Right cardiac atrium (tissue), 5 donors: ENCODE measurements at regions of chr3 and their contacts with region 1.

Region 1: DNA sequence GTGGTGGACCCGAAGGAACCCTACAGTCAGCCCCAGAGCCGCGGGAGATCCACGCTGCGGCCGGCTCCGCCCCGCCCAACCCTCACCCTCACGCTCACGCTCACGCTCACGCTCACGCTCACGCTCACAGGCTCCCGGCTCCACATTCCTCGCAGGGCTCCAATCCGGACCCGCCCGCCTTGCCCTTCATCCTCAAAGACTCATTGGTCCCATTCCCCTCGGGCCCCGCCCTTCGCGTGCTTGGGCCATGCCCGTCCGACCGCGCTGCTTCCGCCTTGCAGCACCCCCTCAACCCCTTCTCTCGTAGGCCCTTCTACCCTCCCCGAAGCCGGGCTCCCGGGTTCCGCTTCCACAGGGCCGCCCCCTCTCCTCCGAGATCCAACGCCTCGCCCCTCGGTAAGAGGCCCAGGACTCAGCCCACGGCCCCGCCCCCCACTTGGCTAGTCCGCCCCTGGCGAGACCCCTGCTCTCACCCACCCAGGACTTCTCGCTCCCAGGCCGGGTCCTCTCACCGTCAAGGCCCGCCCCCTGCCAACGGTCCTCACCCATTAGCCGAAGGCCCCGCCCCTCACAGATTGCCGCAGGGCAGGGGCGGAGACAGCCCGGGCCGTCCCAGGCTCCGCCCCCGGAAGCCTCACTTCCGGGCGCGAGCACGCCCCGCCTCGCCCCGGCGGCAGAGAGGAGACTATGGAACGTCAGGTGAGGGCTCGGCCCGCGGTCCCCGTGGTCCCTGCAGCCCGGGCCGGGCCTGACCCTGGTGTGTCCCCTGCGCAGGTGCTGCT is at the start of gene APEH:
- DNase-seq: peak; percentile 98 to 99 (median 98)
- ATAC-seq: peak; percentile 94 to 95
- H3K4me3 ChIP-seq: peak within 1 kb of the TSS; percentile 67
- H3K27ac ChIP-seq: peak within 1 kb of the TSS; percentile 74
- H3K4me1 ChIP-seq: peaks cover 5% of the 10 kb centered on the region
- H3K27me3 ChIP-seq: no peaks in the 10 kb centered on the region
- total RNA-seq, gene APEH: 75.7 to 110 (median 93.6) TPM

Region 2: GRCh38 chr3:49469936-49470713 is 203.8 kb before region 1 on chr3 and contains the start of gene DAG1:
- intact Hi-C with region 1: loop called in 1 of 4 experiments (anchors 10 kb)
- DNase-seq: peak; percentile 98 to 99 (median 99)
- ATAC-seq: peak; percentile 93
- H3K4me3 ChIP-seq: peak within 1 kb of the TSS; percentile 50
- H3K27ac ChIP-seq: peak within 1 kb of the TSS; percentile 100
- H3K4me1 ChIP-seq: peaks cover 13% of the 10 kb centered on the region
- H3K27me3 ChIP-seq: no peaks in the 10 kb centered on the region
- total RNA-seq, gene DAG1: 113 to 141 (median 121) TPM

Region 3: GRCh38 chr3:49539659-49540560 is 134.0 kb before region 1 on chr3:
- intact Hi-C with region 1: loop called (anchors 2 to 5 kb)
- DNase-seq: peak; percentile 95 to 98 (median 97)
- ATAC-seq: peak; percentile 98 to 99
- H3K4me3 ChIP-seq: peak overlapping the region; percentile 46
- H3K27ac ChIP-seq: peak overlapping the region; percentile 89
- H3K4me1 ChIP-seq: peaks cover 6% of the 10 kb centered on the region
- H3K27me3 ChIP-seq: no peaks in the 10 kb centered on the region

Region 4: GRCh38 chr3:49626101-49626581 is 47.8 kb before region 1 on chr3:
- intact Hi-C with region 1: no loop called
- DNase-seq: no peak
- ATAC-seq: no peak
- H3K4me3 ChIP-seq: no peak overlapping the region
- H3K27ac ChIP-seq: no peak overlapping the region
- H3K4me1 ChIP-seq: no peaks in the 10 kb centered on the region
- H3K27me3 ChIP-seq: no peaks in the 10 kb centered on the region